ENCODE measurements at regions of chr2 and their contacts with region 1.

Region 1: GRCh38 chr2:121596221-121597080 is 52.8 kb downstream of the CLASP1 start:
- DNase-seq: peak; percentile 36
- H3K4me3 ChIP-seq: no peak overlapping the region
- H3K27ac ChIP-seq: no peak overlapping the region
- H3K4me1 ChIP-seq: peaks cover 18% of the 10 kb centered on the region
- H3K27me3 ChIP-seq: no peaks in the 10 kb centered on the region
- CTCF ChIP-seq: peak; percentile 17 to 66

Region 2: GRCh38 chr2:121722479-121722878 is 126.0 kb after region 1 on chr2:
- CTCF ChIA-PET with region 1: interaction called, 5 read pairs
- dilution Hi-C with region 1: no loop called
- in situ Hi-C with region 1: no loop called
- intact Hi-C with region 1: loop called (anchors 1 kb)
- DNase-seq: peak; percentile 82
- H3K4me3 ChIP-seq: no peak overlapping the region
- H3K27ac ChIP-seq: peak overlapping the region; percentile 80
- H3K4me1 ChIP-seq: peaks cover 12% of the 10 kb centered on the region
- H3K27me3 ChIP-seq: no peaks in the 10 kb centered on the region
- CTCF ChIP-seq: no peak

Region 3: GRCh38 chr2:121999267-121999681 is 402.8 kb after region 1 on chr2:
- CTCF ChIA-PET with region 1: no interaction called
- dilution Hi-C with region 1: no loop called
- in situ Hi-C with region 1: no loop called
- intact Hi-C with region 1: no loop called
- DNase-seq: peak; percentile 6
- H3K4me3 ChIP-seq: no peak overlapping the region
- H3K27ac ChIP-seq: no peak overlapping the region
- H3K4me1 ChIP-seq: no peaks in the 10 kb centered on the region
- H3K27me3 ChIP-seq: no peaks in the 10 kb centered on the region
- CTCF ChIP-seq: no peak

Measured in mammary epithelial cell (primary cell).